Posterior vena cava (tissue), 2 donors: ENCODE measurements at regions of chr18 and their contacts with region 1.

Region 1: GRCh38 chr18:42689310-42689709 is 426.2 kb downstream of the RIT2 start:
- DNase-seq: no peak

Region 2: DNA sequence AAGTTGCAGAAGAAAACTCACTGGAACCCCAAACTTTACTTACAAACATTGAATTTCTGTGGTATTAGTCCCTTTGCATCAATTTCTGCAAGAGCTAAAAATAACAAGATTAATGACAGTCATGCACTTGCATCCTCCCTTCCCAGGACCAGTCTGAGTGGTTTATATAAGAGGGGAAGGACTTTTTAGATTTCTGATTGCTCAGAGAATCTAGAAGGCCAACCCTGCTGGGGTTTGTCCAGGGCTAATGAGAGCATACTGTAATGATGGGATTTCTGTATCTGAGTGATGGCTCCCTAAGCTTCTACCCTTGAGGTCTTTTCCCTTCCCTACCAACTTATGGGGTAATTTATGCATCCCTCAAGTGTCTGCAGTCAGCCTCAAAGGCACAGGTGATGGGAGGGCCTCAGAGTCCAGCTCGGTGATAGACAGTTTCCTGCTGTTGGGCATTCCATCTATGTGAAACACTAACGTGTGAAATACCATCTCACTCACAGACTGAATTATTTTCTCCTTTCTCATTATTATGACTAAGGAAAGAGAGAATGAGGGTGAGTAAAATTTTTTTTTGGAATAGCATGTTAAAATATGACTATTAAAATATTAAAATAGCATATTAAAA is 130.1 kb before region 1 on chr18:
- intact Hi-C with region 1: loop called in 1 of 2 experiments (anchors 2 kb)
- DNase-seq: no peak

Region 3: GRCh38 chr18:42712065-42712464 is 22.8 kb after region 1 on chr18:
- intact Hi-C with region 1: no loop called
- DNase-seq: no peak

Region 4: GRCh38 chr18:44386401-44386800 is 1697.1 kb after region 1 on chr18:
- intact Hi-C with region 1: no loop called
- DNase-seq: no peak